RWPE1 (cell line): ENCODE measurements at regions of chr18 and their contacts with region 1.

Region 1: GRCh38 chr18:32549248-32550110 is 78.8 kb upstream of the GAREM1 start:
- DNase-seq: peak; percentile 37
- H3K27ac ChIP-seq: no peak overlapping the region
- CTCF ChIP-seq: peak; percentile 81

Region 2: DNA sequence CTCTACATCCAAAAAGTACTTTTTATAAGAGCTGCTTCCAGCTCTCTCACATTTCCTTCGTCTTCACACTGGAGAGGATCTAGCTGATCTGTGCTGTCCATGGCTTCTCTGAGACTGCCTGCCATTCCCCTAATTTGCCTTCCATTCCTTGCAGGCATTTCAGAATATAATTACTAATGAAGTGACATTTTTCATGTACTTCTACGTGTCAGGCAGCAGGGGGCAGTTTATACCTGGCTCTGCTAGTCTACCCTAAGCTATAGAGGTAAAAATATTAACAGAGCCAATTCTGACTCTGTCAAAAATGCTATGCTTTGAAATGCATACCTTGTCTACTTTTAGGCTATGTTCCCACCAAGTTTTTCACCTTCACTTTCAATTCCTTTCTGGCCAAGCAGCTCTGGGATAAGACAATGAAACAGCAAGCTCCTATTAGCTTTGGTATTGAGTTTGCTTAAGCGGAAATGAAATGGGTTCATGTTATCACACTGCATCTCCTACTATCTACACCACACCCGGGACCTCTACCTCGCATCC is 277.7 kb before region 1 on chr18:
- CTCF ChIA-PET with region 1: interaction called, 11 read pairs
- POLR2A ChIA-PET with region 1: interaction called, 3 read pairs
- DNase-seq: peak; percentile 34
- H3K27ac ChIP-seq: no peak overlapping the region
- CTCF ChIP-seq: peak; percentile 54

Region 3: DNA sequence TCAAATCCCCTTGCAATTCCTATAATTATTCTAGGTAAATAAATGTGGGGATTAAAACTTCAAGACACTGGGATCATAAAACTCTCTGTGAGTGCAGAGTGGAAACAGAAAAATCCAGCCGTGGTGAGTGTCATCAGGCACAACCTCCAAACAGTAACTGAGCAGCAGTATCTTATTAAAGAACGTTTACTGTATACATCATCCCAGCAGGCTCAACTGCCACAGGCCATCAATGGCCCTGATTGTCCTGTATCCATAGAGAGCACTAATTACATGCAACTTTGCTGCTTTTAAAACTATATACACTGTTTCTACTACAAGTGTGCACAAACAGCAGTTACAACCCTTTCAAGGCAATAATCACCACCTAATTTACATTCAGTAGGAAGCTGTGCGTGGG is 102.7 kb before region 1 on chr18:
- CTCF ChIA-PET with region 1: no interaction called
- POLR2A ChIA-PET with region 1: no interaction called
- DNase-seq: no peak
- H3K27ac ChIP-seq: no peak overlapping the region
- CTCF ChIP-seq: no peak

Region 4: DNA sequence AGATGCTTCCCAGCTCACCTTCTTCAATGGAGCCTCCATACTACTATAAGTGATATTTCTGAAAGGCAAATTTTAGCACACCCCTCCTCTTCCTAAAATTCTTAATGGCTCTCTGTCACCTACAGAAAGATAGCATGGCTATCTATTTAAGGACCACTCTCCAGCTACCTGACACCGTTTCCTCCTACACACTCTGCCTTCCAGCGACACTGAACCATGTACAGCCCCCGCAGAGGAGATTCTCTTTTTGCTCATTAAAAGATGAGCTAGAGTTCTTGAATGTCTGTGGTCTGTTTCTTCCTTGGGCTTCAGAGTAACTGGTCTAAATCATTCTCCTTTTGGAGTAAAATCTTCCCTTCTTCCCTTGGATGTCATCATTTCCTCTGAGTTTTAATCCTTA is 40.4 kb before region 1 on chr18:
- CTCF ChIA-PET with region 1: no interaction called
- POLR2A ChIA-PET with region 1: no interaction called
- DNase-seq: no peak
- H3K27ac ChIP-seq: no peak overlapping the region
- CTCF ChIP-seq: no peak

Region 5: DNA sequence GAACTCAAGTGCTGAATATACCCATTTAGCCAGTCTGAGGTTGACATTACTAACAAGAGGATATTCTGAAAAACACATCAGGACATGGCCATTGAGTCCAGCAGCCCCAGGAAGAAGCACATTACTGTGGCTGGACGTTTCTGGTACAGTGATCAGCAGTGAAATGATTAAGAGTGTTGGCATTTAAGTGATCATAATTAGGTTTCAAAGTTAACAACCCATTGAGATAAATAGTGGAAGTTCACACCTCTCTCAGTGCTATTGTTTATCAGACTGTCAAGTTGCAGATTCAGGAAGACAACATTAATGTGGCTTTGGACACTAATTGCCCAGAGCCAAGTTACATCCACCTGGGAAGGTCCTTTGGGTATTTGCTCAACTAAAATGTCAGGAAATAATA is 60.7 kb after region 1 on chr18:
- CTCF ChIA-PET with region 1: no interaction called
- POLR2A ChIA-PET with region 1: no interaction called
- DNase-seq: no peak
- H3K27ac ChIP-seq: no peak overlapping the region
- CTCF ChIP-seq: no peak